Head of caudate nucleus (tissue), 42 donors: ENCODE measurements at regions of chr16 and their contacts with region 1.

Region 1: DNA sequence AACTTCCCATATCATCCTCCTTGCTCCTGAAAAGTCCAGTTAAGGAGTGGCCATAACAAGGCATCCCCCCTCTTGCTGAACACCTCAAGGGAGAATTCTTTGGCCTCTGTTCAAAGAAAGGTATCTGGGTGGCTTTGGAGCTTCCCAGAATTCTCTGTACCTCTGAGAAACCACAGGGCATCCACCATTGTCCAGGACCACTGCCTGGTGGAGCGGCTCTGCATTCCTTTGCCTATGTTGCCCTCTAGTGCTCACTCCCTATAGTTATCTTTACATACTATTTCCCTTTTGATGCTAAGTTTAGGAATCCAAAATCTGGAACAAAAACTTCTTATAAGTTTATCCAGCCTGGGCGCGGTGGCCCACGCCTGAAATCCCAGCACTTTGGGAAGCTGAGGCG is 30.3 kb downstream of the CHD9NB start:
- DNase-seq: peak in 37 of 42 donors; percentile 7 to 72 (median 35)

Region 2: DNA sequence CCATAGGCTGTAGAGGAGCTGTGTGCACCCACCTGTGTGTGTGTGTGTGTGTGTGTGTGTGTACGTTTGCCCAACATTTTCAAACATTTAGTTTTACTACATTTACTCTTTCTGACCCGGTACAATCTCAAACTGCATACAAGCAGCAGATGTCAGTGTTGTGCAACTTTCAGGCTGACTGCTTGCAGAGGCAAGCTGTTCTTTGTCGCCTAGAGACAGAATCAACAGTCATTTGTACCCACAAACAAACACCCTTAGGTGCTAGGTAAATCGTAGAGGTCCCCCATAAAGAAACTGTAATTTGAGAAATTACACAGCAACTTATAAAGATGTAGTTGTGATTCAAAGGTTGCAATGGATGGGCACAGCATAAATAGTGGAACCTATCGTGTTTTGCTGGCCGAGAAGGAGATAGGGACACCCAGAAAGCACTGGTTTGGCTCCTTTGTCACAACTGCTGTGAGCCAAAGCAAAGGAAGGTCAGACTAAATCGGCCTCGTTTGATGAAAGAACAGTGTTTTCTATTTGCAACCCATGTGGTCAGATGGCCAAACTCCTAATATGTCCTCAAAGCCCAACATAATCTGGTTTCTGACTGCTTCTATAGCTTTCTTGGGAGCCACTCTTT is 953.8 kb before region 1 on chr16:
- intact Hi-C with region 1: loop called (anchors 10 kb)
- DNase-seq: peak in 41 of 42 donors; percentile 6 to 80 (median 54)

Region 3: DNA sequence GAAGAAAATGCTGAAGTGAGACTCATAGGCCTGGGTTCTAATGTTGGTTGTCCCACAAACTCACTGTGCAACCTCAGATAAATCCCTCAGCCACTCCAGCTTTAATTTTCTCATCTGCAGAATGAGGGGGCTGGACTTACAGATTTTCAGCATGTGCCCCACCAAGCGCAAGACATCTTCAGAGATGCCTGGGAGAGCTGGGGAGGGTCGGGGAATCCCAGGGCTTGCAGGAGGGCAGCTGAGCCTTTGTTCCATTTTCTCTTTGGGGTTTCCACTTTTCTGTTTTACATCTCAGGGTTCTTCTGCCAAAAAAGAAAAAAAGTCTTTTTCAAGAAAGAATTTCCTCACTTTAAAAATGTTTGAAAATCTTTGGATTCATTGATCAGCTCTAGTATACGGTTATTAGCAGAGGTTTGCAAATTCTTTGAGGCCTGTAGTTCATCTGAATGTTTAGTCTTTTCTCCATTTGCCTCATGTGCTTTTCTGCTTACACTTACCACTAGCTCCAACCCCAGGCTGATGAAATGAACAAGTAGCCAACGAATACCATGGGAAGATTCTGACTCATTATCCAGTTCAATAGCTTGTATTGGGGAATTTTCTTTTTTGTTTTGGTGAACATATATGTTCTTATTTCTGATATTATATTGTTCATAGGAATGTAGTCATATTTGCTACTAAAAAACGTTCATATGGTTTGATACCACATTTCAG is 88.9 kb after region 1 on chr16:
- intact Hi-C with region 1: no loop called
- DNase-seq: no peak

Region 4: DNA sequence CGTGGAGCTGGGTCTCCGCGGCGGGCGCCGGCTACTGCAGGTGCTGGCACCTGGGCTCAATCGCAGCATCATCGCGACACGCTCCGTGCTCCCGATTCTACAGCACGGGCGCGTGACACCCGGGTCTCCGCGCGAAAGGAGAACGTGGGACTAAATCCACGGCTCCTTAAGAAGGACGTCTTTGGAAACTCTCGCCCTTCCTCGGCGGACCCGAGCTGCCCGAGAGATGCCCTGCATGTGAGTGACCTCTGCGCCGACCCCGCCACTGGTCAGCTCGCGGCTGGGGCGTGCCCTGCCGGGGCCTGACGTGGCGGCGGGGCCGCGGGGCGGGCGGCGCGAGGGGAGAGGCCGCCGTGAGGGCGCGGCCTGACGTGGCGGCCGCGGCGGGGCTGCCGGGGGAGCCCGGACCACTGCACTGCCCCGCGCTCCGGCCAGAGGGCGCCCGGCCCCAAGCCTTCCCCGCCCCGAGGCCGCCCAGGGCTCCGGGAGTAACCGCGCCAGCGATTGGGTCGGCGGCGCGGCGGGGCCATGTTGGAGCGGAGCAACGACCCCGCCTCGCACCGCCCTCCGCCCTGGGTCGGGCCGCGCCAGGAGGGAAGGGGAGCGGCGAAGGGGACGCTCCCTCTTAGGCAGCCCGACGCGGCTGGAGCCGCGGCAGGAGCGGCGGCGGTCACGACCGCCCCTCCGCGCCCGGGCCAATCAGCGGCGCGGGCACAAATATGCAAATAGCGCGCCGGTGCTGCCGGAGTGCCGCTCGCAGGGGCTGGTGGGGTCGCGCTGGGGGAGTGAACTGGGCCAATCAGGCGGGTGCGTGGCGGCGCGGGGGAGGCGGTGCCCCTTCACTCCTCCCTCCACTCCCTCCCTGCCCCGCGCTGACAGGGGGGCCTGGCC is 108.0 kb after region 1 on chr16:
- intact Hi-C with region 1: no loop called
- DNase-seq: peak; percentile 88 to 99 (median 96)